Psoas muscle (tissue), 8 donors: ENCODE measurements at regions of chr12 and their contacts with region 1.

Region 1: DNA sequence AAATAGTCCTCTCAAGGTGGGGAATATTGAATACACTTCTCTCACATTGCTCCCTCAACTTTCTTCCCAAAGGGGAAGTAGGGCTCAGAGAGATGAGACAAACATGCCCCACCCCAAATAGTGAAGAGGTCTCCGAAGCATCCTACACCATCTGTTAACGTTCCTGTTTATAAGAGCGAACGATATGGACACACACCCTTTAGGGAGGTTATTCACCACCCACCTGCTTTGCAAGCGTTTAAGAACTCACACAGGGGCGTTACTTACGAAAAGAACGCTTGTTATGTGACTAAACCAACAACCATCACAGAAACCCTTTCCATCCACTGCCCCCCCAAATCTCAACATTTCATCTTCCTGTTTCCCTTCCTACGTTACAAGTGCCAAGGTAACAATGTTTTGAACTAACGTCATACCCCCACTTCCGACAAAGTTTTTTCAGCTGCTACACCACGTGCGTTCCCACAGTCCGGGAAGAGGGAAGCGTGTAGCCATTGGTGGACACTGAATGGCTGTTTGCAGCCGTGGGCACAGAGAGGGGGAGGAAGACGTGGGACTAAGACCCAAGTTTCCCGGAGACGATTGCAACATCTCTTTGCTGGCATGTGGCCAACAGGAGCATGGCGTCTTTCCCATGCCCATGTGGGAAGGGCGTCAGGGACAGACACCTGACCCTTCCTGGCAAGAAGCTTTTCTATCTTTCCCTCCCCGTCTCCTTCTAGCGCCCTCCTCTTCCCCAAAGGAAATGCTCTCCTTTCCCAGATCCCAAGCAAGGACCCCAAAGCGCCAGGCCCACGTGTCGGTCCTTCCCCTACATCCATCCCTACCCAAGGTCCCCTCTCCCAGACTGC is 1.2 kb downstream of the YBX3 start:
- DNase-seq: peak; percentile 93 to 98
- ATAC-seq: peak; percentile 78 to 87 (median 82)
- H3K4me3 ChIP-seq: peak overlapping the region; percentile 94
- H3K27ac ChIP-seq: peak overlapping the region; percentile 98
- H3K4me1 ChIP-seq: peaks cover 9% of the 10 kb centered on the region
- H3K27me3 ChIP-seq: no peaks in the 10 kb centered on the region
- CTCF ChIP-seq: no peak

Region 2: DNA sequence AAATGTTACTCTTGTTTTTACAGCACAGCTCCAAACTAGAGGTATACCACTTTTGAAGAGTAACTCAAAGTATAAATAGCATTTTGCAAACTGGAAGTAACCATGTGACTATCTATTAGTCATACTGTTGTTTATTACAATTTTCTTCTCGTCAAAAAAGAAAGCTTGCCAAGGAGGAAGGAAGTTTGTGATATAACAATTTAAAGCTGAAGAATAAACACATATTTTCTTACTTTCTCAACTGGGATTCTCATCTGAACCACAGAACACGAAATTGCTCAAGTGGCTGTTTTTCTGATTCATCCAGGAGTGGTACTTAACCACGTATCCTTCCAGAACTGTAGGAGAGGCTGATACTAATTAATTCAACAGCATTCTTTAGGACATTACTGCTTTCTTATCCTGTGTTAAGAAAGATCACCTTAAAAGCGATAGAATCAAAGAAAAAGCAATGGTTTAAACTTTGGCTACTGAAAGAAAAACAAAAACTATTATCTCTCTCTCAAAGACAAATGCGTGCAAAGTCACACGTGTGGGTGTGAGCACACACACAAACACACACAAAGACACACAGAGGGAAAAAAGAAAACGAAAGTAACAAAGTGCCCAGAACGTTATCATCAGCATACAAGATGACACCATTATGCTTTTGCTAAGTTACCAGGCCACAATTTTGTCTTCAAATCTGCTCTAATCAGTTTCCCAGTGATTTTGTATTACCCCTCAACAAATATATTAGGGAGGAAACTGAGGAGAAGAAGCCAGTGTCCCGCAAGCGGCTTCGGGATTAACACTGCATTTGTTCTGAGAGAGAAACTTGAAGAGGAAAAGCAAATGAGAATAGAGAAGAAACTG is 852.3 kb before region 1 on chr12 and contains the start of gene CLEC2B:
- intact Hi-C with region 1: loop called in 1 of 2 experiments (anchors 5 kb)
- DNase-seq: no peak
- ATAC-seq: peak; percentile 58 to 88 (median 81)
- H3K4me3 ChIP-seq: peak within 1 kb of the TSS; percentile 71
- H3K27ac ChIP-seq: peak within 1 kb of the TSS; percentile 86
- H3K4me1 ChIP-seq: peaks cover 13% of the 10 kb centered on the region
- H3K27me3 ChIP-seq: no peaks in the 10 kb centered on the region
- CTCF ChIP-seq: no peak
- total RNA-seq, gene CLEC2B: 5.5 to 24.9 (median 10.5) TPM

Region 3: GRCh38 chr12:10212201-10213131 is 509.4 kb before region 1 on chr12 and contains the start of gene GABARAPL1:
- intact Hi-C with region 1: loop called (anchors 5 kb)
- DNase-seq: peak; percentile 98 to 99
- ATAC-seq: peak; percentile 85 to 92 (median 88)
- H3K4me3 ChIP-seq: peak within 1 kb of the TSS; percentile 92
- H3K27ac ChIP-seq: peak within 1 kb of the TSS; percentile 100
- H3K4me1 ChIP-seq: peaks cover 24% of the 10 kb centered on the region
- H3K27me3 ChIP-seq: no peaks in the 10 kb centered on the region
- CTCF ChIP-seq: no peak
- total RNA-seq, gene GABARAPL1: 124 to 255 (median 218) TPM

Region 4: GRCh38 chr12:10749700-10750384 is 28.0 kb after region 1 on chr12:
- intact Hi-C with region 1: loop called in 1 of 2 experiments (anchors 1 kb)
- DNase-seq: peak; percentile 48 to 70
- ATAC-seq: peak; percentile 90 to 97 (median 92)
- H3K4me3 ChIP-seq: peak overlapping the region; percentile 56
- H3K27ac ChIP-seq: peak overlapping the region; percentile 56
- H3K4me1 ChIP-seq: peaks cover 10% of the 10 kb centered on the region
- H3K27me3 ChIP-seq: no peaks in the 10 kb centered on the region
- CTCF ChIP-seq: peak; percentile 93

Region 5: GRCh38 chr12:10779103-10779502 is 57.2 kb after region 1 on chr12:
- intact Hi-C with region 1: no loop called
- DNase-seq: no peak
- ATAC-seq: no peak
- H3K4me3 ChIP-seq: no peak overlapping the region
- H3K27ac ChIP-seq: no peak overlapping the region
- H3K4me1 ChIP-seq: no peaks in the 10 kb centered on the region
- H3K27me3 ChIP-seq: peaks cover 0 to 2% (median 0%) of the 10 kb centered on the region in 3 donors
- CTCF ChIP-seq: no peak

Region 6: DNA sequence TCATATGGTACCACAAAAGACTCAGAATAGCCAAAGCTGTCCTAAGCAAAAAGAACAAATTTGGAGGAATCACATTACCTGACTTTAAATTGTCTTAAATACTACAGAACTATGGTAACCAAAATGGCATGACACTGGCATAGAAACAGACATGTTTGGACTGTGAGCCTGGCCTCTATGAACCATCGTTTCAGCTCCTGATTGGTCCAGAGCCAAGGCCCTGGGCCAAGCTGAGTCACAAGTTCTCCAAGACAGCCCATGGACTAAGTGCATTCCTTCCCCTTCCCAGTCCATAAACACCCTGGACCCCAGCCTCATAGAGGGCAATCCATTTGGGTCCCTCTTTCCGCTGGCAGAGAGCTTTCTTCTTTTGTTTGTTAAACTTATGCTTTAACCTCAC is 139.5 kb after region 1 on chr12:
- intact Hi-C with region 1: no loop called
- DNase-seq: no peak
- ATAC-seq: no peak
- H3K4me3 ChIP-seq: no peak overlapping the region
- H3K27ac ChIP-seq: no peak overlapping the region
- H3K4me1 ChIP-seq: no peaks in the 10 kb centered on the region
- H3K27me3 ChIP-seq: no peaks in the 10 kb centered on the region
- CTCF ChIP-seq: no peak